ENCODE measurements at regions of chr4 and their contacts with region 1.

Region 1: DNA sequence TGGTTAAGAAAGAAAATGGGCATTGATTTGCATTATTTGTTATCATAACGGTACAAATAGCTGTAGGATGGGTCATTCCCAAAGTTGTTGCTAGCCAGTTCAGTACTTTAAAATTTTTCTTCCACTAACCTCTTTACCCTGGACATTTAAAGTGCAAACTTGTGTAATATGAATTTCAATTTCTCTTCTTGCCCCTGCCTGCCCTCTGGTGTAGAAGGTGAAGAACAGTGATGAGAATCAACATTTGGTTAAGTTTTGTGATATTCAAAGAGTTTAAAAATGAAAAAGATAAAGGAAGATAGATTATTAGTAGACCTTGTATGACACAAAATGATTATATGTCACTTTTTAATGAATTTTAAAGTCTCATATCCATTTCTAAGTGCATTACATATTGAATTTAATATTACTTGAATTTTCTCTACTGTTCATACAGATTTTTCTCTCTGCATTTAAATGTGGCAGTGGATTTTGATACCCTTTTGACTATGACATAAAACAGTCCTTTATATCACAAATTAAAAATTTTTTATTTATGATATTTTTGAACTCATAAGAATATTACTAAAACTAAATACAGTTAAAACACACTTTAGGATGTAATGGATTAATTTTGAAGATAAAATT is 337.7 kb downstream of the BMPR1B start:
- DNase-seq: peak; percentile 71
- H3K4me3 Mint-ChIP-seq: no peak overlapping the region
- H3K27ac Mint-ChIP-seq: peak overlapping the region; percentile 42
- H3K4me1 Mint-ChIP-seq: peaks cover 20% of the 10 kb centered on the region
- H3K27me3 Mint-ChIP-seq: no peaks in the 10 kb centered on the region
- CTCF ChIP-seq: peak; percentile 67

Region 2: DNA sequence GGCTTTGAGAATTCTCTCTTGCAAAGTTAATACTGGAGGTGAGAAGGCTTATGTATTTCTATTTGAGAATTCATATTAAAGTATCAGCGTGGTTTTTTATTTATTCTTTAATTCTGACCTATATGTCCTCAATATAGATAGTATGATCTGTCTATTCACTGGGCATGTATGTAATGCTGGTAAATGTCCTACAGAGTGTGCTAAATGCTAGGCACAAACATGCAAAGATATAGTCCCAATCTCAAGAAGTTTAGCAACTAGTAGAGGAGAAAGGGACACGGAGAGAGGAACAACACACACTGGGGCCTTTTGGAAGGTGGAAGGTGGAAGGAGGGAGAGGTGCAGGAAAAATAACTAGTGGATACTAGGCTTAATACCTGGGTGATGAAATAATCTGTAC is 348.7 kb before region 1 on chr4:
- CTCF ChIA-PET with region 1: no interaction called
- POLR2A ChIA-PET with region 1: no interaction called
- intact Hi-C with region 1: loop called (anchors 1 kb)
- DNase-seq: peak; percentile 31
- H3K4me3 Mint-ChIP-seq: no peak overlapping the region
- H3K27ac Mint-ChIP-seq: no peak overlapping the region
- H3K4me1 Mint-ChIP-seq: peaks cover 4% of the 10 kb centered on the region
- H3K27me3 Mint-ChIP-seq: no peaks in the 10 kb centered on the region
- CTCF ChIP-seq: peak; percentile 38

Region 3: GRCh38 chr4:94757192-94758139 is 338.0 kb before region 1 on chr4 and contains the start of gene BMPR1B:
- CTCF ChIA-PET with region 1: interaction called, 12 read pairs
- POLR2A ChIA-PET with region 1: interaction called, 39 read pairs
- intact Hi-C with region 1: loop called (anchors 1 kb)
- DNase-seq: peak; percentile 80
- H3K4me3 Mint-ChIP-seq: peak within 1 kb of the TSS; percentile 85
- H3K27ac Mint-ChIP-seq: peak within 1 kb of the TSS; percentile 96
- H3K4me1 Mint-ChIP-seq: peaks cover 25% of the 10 kb centered on the region
- H3K27me3 Mint-ChIP-seq: no peaks in the 10 kb centered on the region
- CTCF ChIP-seq: peak; percentile 16
- total RNA-seq, gene BMPR1B: 17.2 and 18.8 TPM in 2 replicates

Region 4: DNA sequence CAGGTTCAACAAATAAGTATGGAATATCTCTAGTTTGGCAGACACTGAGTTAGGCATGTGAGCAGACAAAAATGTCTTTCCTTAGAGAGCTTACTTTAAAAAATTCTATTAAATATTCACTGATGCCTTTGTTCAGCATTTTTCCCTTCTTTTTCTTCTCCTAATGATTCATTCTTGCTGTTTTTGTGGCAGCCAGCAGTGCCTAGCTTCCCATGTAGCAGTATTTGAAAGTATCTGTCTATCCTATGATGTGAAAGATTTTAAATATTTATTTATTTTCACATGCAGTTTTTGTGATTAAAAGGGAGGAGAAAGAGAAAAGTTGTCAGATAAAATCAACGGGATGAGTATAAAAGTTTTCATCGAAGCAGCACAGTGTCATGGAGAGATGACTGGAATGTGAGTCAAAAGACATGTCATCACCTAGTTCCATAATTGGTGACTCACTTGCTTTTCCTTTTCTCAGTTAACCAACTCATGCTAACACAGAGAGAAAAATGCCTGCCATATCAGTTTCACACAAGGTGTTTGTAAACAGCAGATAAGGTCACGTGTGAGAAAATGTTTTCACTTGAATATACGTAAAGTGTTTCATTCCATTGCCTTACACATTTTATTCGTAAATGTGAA is 267.9 kb before region 1 on chr4:
- CTCF ChIA-PET with region 1: interaction called, 3 read pairs
- POLR2A ChIA-PET with region 1: interaction called, 4 read pairs
- intact Hi-C with region 1: loop called (anchors 5 kb)
- DNase-seq: peak; percentile 86
- H3K4me3 Mint-ChIP-seq: peak overlapping the region; percentile 8
- H3K27ac Mint-ChIP-seq: peak overlapping the region; percentile 74
- H3K4me1 Mint-ChIP-seq: peaks cover 14% of the 10 kb centered on the region
- H3K27me3 Mint-ChIP-seq: no peaks in the 10 kb centered on the region
- CTCF ChIP-seq: no peak

Region 5: DNA sequence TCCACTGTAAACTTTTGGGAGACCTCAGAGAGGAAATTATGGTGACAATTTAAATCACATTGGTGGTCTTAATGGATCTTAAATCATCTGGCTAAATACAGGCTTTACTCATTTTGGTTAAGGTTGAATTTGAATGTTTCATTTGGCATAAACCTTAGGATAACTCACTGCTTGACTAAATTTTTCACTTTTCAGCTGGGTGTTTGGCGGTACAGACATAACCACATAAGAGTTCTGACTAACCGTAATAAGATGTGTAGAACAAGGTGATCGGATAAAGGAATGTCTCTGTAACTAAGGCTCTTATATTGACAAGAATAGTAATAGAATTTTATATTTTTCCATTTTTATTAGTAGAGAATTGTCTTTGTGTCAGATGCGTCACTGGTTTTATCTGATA is 56.7 kb before region 1 on chr4:
- CTCF ChIA-PET with region 1: no interaction called
- POLR2A ChIA-PET with region 1: no interaction called
- intact Hi-C with region 1: no loop called
- DNase-seq: no peak
- H3K4me3 Mint-ChIP-seq: no peak overlapping the region
- H3K27ac Mint-ChIP-seq: no peak overlapping the region
- H3K4me1 Mint-ChIP-seq: no peaks in the 10 kb centered on the region
- H3K27me3 Mint-ChIP-seq: no peaks in the 10 kb centered on the region
- CTCF ChIP-seq: no peak

Region 6: DNA sequence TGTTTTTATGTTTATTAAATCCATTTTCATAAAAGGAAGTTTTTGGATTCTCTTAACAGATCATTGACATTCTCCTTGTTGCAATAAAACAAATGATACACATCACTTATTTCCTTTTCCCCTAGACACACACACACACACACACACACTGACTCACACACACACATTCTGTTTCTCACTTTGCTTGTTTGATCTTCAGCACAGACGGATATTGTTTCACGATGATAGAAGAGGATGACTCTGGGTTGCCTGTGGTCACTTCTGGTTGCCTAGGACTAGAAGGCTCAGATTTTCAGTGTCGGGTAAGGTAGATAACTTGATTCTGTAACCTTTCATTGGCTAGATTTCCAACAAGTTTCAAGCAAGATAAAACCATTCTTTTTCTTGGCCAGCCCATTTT is 19.1 kb after region 1 on chr4:
- CTCF ChIA-PET with region 1: no interaction called
- POLR2A ChIA-PET with region 1: no interaction called
- intact Hi-C with region 1: no loop called
- DNase-seq: no peak
- H3K4me3 Mint-ChIP-seq: no peak overlapping the region
- H3K27ac Mint-ChIP-seq: no peak overlapping the region
- H3K4me1 Mint-ChIP-seq: no peaks in the 10 kb centered on the region
- H3K27me3 Mint-ChIP-seq: no peaks in the 10 kb centered on the region
- CTCF ChIP-seq: no peak

Region 7: DNA sequence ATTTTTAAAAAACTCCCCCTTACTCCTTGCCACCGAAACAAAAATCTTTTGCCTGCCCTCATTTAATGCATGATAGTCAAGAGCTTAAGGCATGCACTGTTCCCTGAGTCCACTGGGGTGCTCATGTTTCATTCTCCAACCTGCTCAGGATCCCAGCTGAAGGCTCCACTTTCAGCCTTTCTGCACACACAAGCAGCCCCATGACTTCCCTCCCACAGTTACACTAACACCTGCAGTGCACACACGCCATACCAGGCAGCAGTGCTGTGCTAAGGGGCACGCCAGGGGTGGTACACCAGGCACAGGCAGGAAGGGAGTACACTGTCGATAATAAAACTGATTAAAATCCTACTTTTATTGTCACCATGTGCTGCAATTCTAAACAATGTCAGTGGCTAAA is 47.5 kb after region 1 on chr4:
- CTCF ChIA-PET with region 1: no interaction called
- POLR2A ChIA-PET with region 1: no interaction called
- intact Hi-C with region 1: no loop called
- DNase-seq: no peak
- H3K4me3 Mint-ChIP-seq: no peak overlapping the region
- H3K27ac Mint-ChIP-seq: no peak overlapping the region
- H3K4me1 Mint-ChIP-seq: no peaks in the 10 kb centered on the region
- H3K27me3 Mint-ChIP-seq: no peaks in the 10 kb centered on the region
- CTCF ChIP-seq: no peak

Measured in MCF 10A (cell line).